Mammary epithelial cell (primary cell): ENCODE measurements at regions of chr3 and their contacts with region 1.

Region 1: GRCh38 chr3:127448161-127448561 is 142.4 kb downstream of the TPRA1 start:
- DNase-seq: peak; percentile 16
- H3K4me3 ChIP-seq: no peak overlapping the region
- H3K27ac ChIP-seq: no peak overlapping the region
- H3K4me1 ChIP-seq: peaks cover 20% of the 10 kb centered on the region
- H3K27me3 ChIP-seq: no peaks in the 10 kb centered on the region
- CTCF ChIP-seq: peak; percentile 17 to 62

Region 2: GRCh38 chr3:127277561-127277960 is 170.6 kb before region 1 on chr3:
- CTCF ChIA-PET with region 1: no interaction called
- dilution Hi-C with region 1: no loop called
- in situ Hi-C with region 1: no loop called
- intact Hi-C with region 1: no loop called
- DNase-seq: peak; percentile 46
- H3K4me3 ChIP-seq: no peak overlapping the region
- H3K27ac ChIP-seq: no peak overlapping the region
- H3K4me1 ChIP-seq: peaks cover 44% of the 10 kb centered on the region
- H3K27me3 ChIP-seq: no peaks in the 10 kb centered on the region
- CTCF ChIP-seq: no peak

Region 3: GRCh38 chr3:127366383-127366782 is 81.8 kb before region 1 on chr3:
- CTCF ChIA-PET with region 1: no interaction called
- dilution Hi-C with region 1: loop called (anchors 5 kb)
- in situ Hi-C with region 1: no loop called
- intact Hi-C with region 1: no loop called
- DNase-seq: no peak
- H3K4me3 ChIP-seq: no peak overlapping the region
- H3K27ac ChIP-seq: no peak overlapping the region
- H3K4me1 ChIP-seq: no peaks in the 10 kb centered on the region
- H3K27me3 ChIP-seq: no peaks in the 10 kb centered on the region
- CTCF ChIP-seq: no peak

Region 4: DNA sequence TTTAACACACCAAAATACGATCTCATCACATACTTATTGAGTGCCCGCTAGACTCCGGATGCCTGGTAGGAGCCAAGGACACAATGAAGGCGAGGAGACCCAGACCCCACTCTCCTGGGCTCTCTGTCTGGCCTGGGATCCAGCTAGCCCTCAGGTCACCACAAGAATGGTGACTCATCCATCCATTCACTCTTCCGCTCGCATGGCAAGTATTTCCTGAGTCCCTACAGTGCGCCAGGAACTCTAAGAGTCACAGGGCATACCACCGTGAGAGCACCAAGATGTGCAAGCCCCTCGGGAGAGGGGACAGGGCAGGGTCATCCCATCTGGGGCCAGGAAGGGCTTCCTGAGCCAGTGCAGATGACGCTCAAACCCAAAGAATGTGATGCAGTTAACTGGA is 58.7 kb before region 1 on chr3:
- CTCF ChIA-PET with region 1: no interaction called
- dilution Hi-C with region 1: no loop called
- in situ Hi-C with region 1: no loop called
- intact Hi-C with region 1: no loop called
- DNase-seq: peak; percentile 24
- H3K4me3 ChIP-seq: no peak overlapping the region
- H3K27ac ChIP-seq: no peak overlapping the region
- H3K4me1 ChIP-seq: no peaks in the 10 kb centered on the region
- H3K27me3 ChIP-seq: peaks cover 4% of the 10 kb centered on the region
- CTCF ChIP-seq: no peak